CD4-positive, alpha-beta memory T cell (primary cell): ENCODE measurements at regions of chr17 and their contacts with region 1.

Region 1: DNA sequence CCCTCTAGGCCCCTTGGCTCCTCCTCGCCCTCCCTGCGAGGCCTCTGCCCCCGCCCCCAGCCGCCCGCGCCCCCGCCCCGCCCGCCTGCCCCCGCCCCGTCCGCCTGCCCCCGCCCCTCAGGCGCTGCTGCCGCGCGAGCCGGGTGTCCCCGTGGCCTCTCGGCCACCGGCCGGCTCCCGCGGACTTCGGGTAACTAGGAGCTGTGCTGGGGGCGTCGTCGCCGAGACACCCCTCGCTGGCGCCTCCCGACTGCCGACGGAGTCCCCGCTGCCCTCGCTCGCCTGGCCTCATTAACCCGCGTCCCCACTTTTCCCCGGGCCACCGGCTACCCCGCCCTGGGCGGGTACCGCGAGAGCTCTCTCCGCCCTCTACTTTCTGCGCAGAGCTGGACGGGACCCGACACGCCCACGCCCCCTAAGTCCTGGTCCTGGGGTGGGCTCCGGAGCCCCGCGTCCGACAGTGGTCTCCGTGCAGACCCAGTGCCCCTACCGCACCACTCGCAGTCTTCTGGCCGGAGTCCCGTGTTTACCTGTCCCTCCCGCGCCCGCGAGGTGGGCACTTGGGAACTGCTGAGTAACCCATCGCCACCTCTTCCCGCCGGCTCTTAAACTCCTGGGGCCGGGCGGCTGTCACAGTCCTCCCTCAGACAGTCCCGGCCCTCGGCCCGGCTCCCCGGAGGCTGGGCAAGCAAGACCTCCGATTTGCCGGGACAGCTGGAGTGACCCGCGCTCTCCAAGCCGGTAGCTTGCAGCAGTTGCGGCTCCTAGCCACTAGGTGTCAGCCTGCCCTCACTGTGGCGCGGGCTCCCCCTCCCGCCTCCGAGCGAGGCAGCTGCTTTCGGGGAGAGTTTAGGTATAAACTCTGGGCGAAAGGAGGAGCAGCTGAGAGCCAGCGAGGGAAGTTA is at the start of gene TLCD1:
- DNase-seq: peak; percentile 86 to 91 (median 88)
- H3K4me3 ChIP-seq: peak within 1 kb of the TSS; percentile 57 to 85
- H3K4me3 Mint-ChIP-seq: peak within 1 kb of the TSS; percentile 91 to 98 (median 96)
- H3K27ac ChIP-seq: peak within 1 kb of the TSS; percentile 98
- H3K27ac Mint-ChIP-seq: peak within 1 kb of the TSS; percentile 99 to 100 (median 100)
- H3K4me1 ChIP-seq: peaks cover 46% of the 10 kb centered on the region
- H3K4me1 Mint-ChIP-seq: peaks cover 36 to 70% (median 48%) of the 10 kb centered on the region in 4 donors
- H3K27me3 ChIP-seq: no peaks in the 10 kb centered on the region
- H3K27me3 Mint-ChIP-seq: no peaks in the 10 kb centered on the region
- total RNA-seq, gene TLCD1: 1.0 to 2.2 TPM

Region 2: GRCh38 chr17:28446728-28447395 is 279.6 kb before region 1 on chr17:
- CTCF ChIA-PET with region 1: no interaction called
- POLR2A ChIA-PET with region 1: no interaction called
- intact Hi-C with region 1: no loop called
- DNase-seq: no peak
- H3K4me3 ChIP-seq: no peak overlapping the region
- H3K4me3 Mint-ChIP-seq: no peak overlapping the region
- H3K27ac ChIP-seq: no peak overlapping the region
- H3K27ac Mint-ChIP-seq: no peak overlapping the region
- H3K4me1 ChIP-seq: no peaks in the 10 kb centered on the region
- H3K4me1 Mint-ChIP-seq: no peaks in the 10 kb centered on the region
- H3K27me3 ChIP-seq: no peaks in the 10 kb centered on the region
- H3K27me3 Mint-ChIP-seq: peaks cover 7 to 12% of the 10 kb centered on the region in 2 donors

Region 3: DNA sequence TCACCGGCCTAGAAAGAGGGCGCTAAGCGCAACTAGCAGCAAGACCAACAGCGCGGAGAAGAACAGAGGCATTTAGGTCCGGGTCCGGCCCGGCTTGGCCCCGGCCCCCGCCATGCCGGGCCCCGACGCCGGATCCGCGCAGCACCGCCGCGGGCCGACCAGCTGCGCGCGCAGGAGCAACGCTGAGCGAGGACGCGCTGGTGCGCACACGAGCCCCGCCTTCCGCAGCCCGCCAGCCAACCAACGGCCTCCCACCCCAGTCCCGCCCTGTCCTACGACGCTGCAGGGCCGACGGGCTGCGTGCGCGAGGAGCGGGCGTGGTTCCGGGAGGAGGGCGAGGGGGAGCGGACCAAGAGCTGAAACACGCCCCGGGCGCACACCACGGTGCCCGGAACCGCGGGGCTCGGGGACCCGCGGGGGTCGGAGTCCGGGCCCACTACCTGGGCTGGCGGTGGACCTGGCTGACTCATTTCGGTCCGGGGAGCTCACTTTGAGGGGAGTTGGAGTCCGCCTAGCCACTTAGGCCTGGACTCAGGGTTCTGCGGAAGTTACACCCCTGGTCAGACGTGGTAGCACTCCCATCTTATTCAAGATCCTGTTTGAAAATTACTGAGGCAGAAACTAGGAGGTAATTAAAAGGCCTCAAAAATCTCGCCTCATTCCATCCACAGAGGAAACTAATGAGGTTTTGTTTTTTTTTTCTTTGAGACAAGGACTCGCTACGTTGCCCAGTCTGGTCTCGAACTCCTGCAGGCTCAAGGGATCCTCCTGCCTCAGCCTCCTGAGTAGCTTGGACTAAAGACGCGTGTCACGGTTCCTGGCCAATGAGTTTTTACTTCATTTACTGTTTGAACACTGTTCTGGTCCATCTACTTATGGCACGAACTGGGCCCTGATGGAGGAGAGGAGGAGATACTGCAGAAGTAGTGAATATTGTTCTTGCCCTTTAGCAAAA is 81.2 kb before region 1 on chr17 and contains the start of gene BLTP2:
- CTCF ChIA-PET with region 1: interaction called, 19 read pairs
- POLR2A ChIA-PET with region 1: interaction called, 29 read pairs
- intact Hi-C with region 1: loop called (anchors 2 kb)
- DNase-seq: peak; percentile 93 to 95 (median 94)
- H3K4me3 ChIP-seq: peak within 1 kb of the TSS; percentile 45 to 98
- H3K4me3 Mint-ChIP-seq: peak within 1 kb of the TSS; percentile 86 to 96 (median 92)
- H3K27ac ChIP-seq: peak within 1 kb of the TSS; percentile 91
- H3K27ac Mint-ChIP-seq: peak within 1 kb of the TSS; percentile 93 to 99 (median 98)
- H3K4me1 ChIP-seq: peaks cover 47% of the 10 kb centered on the region
- H3K4me1 Mint-ChIP-seq: peaks cover 31 to 45% (median 37%) of the 10 kb centered on the region in 4 donors
- H3K27me3 ChIP-seq: no peaks in the 10 kb centered on the region
- H3K27me3 Mint-ChIP-seq: no peaks in the 10 kb centered on the region
- total RNA-seq, gene BLTP2: 132 to 149 TPM

Region 4: GRCh38 chr17:28750178-28751047 is 23.9 kb after region 1 on chr17:
- CTCF ChIA-PET with region 1: interaction called, 492 read pairs
- POLR2A ChIA-PET with region 1: interaction called, 528 read pairs
- intact Hi-C with region 1: loop called (anchors 1 kb)
- DNase-seq: peak; percentile 82 to 89 (median 85)
- H3K4me3 ChIP-seq: no peak overlapping the region
- H3K4me3 Mint-ChIP-seq: peak overlapping the region in 1 of 8 donors; percentile 49
- H3K27ac ChIP-seq: peak overlapping the region; percentile 10
- H3K27ac Mint-ChIP-seq: peak overlapping the region in 6 of 7 donors; percentile 17 to 85 (median 70)
- H3K4me1 ChIP-seq: peaks cover 13% of the 10 kb centered on the region
- H3K4me1 Mint-ChIP-seq: peaks cover 7 to 18% (median 11%) of the 10 kb centered on the region in 4 donors
- H3K27me3 ChIP-seq: no peaks in the 10 kb centered on the region
- H3K27me3 Mint-ChIP-seq: no peaks in the 10 kb centered on the region

Region 5: GRCh38 chr17:28788100-28788499 is 61.6 kb after region 1 on chr17:
- CTCF ChIA-PET with region 1: no interaction called
- POLR2A ChIA-PET with region 1: no interaction called
- intact Hi-C with region 1: no loop called
- DNase-seq: no peak
- H3K4me3 ChIP-seq: no peak overlapping the region
- H3K4me3 Mint-ChIP-seq: no peak overlapping the region
- H3K27ac ChIP-seq: no peak overlapping the region
- H3K27ac Mint-ChIP-seq: peak overlapping the region in 2 of 7 donors; percentile 17 to 57
- H3K4me1 ChIP-seq: peaks cover 3% of the 10 kb centered on the region
- H3K4me1 Mint-ChIP-seq: peaks cover 9 to 15% (median 11%) of the 10 kb centered on the region in 4 donors
- H3K27me3 ChIP-seq: no peaks in the 10 kb centered on the region
- H3K27me3 Mint-ChIP-seq: no peaks in the 10 kb centered on the region

Region 6: DNA sequence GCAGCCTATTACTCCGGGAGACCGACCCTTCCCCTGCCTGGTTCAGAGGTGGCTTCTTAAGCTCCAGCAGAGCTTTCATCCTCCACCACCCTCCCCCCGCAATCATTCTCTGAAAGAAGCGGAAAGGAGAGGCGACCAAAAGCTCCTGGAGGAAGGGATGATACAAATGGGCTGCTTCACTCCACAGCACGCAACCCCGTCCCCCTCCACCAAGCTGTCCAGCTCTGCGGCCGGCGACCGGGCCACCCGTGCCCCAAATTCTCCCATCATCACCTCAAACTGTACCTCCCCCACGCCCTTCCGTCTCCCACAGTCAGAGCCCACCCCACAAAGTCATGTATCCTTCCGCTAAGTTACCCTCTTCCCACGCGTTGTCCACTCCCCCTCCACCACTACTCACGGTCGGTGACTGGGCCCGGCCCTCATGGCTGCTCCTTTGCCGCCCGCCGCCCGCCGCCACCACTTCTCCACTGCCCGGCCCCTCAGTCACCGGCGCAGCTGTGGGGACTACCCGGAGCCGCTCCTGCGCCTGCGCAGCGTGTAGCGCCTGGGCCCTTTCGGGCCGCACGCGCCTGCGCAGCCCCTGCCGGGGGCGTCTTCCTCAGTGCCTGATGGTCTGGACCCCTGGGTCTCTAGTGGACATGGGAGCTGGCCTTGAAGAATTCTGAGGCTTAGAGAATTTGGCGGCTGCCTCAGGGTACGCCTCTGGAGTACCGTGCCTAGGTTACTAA is 116.0 kb after region 1 on chr17 and contains the start of gene FAM222B:
- CTCF ChIA-PET with region 1: interaction called, 13 read pairs
- POLR2A ChIA-PET with region 1: interaction called, 10 read pairs
- intact Hi-C with region 1: no loop called
- DNase-seq: peak; percentile 85 to 87 (median 87)
- H3K4me3 ChIP-seq: peak within 1 kb of the TSS; percentile 55 to 87
- H3K4me3 Mint-ChIP-seq: peak within 1 kb of the TSS; percentile 93 to 100 (median 98)
- H3K27ac ChIP-seq: peak within 1 kb of the TSS; percentile 84
- H3K27ac Mint-ChIP-seq: peak within 1 kb of the TSS; percentile 93 to 99 (median 98)
- H3K4me1 ChIP-seq: peaks cover 25% of the 10 kb centered on the region
- H3K4me1 Mint-ChIP-seq: peaks cover 15 to 26% (median 21%) of the 10 kb centered on the region in 4 donors
- H3K27me3 ChIP-seq: no peaks in the 10 kb centered on the region
- H3K27me3 Mint-ChIP-seq: no peaks in the 10 kb centered on the region
- total RNA-seq, gene FAM222B: 19.0 to 23.0 TPM

Region 7: DNA sequence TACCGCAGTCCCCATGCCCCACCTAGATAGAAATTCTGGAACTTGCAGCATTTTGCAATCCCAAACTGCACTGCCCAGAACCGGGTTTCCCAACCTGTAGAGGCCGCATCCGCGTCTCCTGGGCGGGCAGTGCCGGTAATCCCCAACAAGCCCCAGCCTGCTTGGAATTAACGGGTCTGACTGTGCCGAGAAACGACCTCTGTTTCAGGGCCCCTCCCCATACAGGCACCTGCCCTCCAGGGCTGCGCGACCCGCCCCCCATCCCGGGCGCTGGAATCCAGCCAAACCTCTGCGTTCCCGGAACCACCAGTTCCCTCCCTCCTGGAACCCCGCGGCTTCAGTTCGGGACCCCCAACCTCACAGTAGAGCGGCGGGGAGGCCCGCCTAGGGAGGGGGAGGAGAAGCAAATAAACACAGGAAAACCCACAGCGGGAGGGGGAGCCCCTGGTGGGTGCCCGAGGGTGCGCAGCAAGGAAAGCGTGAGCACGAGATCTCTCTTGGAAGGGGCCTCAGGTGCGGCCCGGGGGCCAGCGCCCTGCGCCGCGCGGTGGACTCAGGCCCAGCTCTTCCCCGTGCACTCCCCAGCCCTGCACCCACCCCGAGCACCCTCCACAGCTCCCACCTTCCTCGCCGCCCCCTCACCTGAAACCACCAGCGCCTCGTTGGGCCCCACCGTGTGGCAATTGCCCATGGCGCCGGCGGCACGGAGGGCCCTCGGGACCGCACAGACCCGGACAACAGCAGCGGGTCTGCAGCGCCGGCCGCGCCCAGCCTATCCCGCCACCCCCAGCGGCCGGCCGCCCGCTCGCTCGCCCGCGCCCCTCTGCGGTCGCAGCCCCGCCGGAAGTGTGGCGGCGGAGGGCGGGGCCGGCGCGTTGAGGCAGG is 170.6 kb after region 1 on chr17 and contains the start of gene FLOT2:
- CTCF ChIA-PET with region 1: interaction called, 25 read pairs
- POLR2A ChIA-PET with region 1: interaction called, 45 read pairs
- intact Hi-C with region 1: no loop called
- DNase-seq: peak; percentile 65 to 81 (median 74)
- H3K4me3 ChIP-seq: peak within 1 kb of the TSS; percentile 86 to 90
- H3K4me3 Mint-ChIP-seq: peak within 1 kb of the TSS; percentile 91 to 98 (median 96)
- H3K27ac ChIP-seq: peak within 1 kb of the TSS; percentile 88
- H3K27ac Mint-ChIP-seq: peak within 1 kb of the TSS; percentile 95 to 100 (median 96)
- H3K4me1 ChIP-seq: peaks cover 73% of the 10 kb centered on the region
- H3K4me1 Mint-ChIP-seq: peaks cover 47 to 83% (median 65%) of the 10 kb centered on the region in 4 donors
- H3K27me3 ChIP-seq: no peaks in the 10 kb centered on the region
- H3K27me3 Mint-ChIP-seq: no peaks in the 10 kb centered on the region
- total RNA-seq, gene FLOT2: 216 to 224 TPM

Region 8: GRCh38 chr17:28925912-28926365 is 199.5 kb after region 1 on chr17:
- CTCF ChIA-PET with region 1: interaction called, 5 read pairs
- POLR2A ChIA-PET with region 1: interaction called, 21 read pairs
- intact Hi-C with region 1: no loop called
- DNase-seq: peak; percentile 87 to 92 (median 89)
- H3K4me3 ChIP-seq: peak overlapping the region in 1 of 2 donors; percentile 15
- H3K4me3 Mint-ChIP-seq: peak overlapping the region; percentile 49 to 80 (median 60)
- H3K27ac ChIP-seq: peak overlapping the region; percentile 77
- H3K27ac Mint-ChIP-seq: peak overlapping the region; percentile 90 to 98 (median 96)
- H3K4me1 ChIP-seq: peaks cover 56% of the 10 kb centered on the region
- H3K4me1 Mint-ChIP-seq: peaks cover 49 to 79% (median 59%) of the 10 kb centered on the region in 4 donors
- H3K27me3 ChIP-seq: no peaks in the 10 kb centered on the region
- H3K27me3 Mint-ChIP-seq: no peaks in the 10 kb centered on the region

Region 9: DNA sequence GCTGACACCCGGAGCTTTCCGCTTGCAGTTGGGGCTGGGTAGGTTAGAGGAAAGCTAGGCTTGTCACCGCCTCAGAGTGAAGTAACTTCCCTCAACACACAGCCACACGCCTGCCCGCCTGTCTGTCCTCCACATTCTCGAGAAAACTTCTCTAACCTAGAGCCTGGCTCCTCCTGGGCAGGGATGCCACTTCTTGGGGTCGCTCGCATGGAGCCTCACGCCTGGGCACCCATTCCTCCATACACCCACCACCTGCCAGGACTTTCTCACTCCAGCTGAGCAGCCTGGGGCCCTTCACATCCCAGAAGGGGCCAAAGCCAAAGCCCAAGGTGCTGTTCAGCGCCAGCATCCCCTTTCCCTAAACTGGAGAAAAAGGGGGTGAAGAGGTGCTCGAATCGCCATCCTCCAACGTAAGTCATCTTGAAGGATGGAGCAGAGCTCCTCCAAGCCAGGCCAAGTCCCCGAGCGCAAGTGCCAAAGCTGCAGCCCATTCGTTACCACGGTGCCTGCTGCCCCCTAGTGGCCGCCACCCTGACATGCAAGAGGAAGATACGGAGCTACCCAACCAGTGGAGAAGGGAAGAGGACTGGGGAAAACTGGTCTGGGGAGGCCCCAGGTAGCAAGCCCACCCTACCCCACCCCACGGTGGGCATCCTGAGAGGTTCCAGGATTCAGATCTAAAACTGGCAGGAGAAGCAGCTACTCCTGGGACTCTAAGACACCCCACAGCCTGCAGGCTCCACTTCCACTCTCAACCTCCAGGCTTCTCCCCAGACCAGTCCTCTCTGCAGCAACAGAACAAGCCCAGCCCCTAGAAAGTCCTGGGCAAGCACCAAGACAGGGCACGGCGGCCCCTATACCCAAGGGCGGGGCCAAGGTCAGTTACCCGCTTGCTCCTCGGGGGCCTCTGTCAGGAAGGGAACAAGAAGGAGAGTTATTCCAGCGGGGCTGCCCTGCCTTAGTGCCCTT is 390.6 kb after region 1 on chr17:
- CTCF ChIA-PET with region 1: interaction called, 21 read pairs
- POLR2A ChIA-PET with region 1: interaction called, 8 read pairs
- intact Hi-C with region 1: loop called (anchors 2 kb)
- DNase-seq: peak; percentile 66 to 73 (median 71)
- H3K4me3 ChIP-seq: no peak overlapping the region
- H3K4me3 Mint-ChIP-seq: peak overlapping the region in 1 of 8 donors; percentile 15
- H3K27ac ChIP-seq: no peak overlapping the region
- H3K27ac Mint-ChIP-seq: peak overlapping the region in 4 of 7 donors; percentile 43 to 75 (median 60)
- H3K4me1 ChIP-seq: peaks cover 4% of the 10 kb centered on the region
- H3K4me1 Mint-ChIP-seq: peaks cover 4 to 9% (median 8%) of the 10 kb centered on the region in 4 donors
- H3K27me3 ChIP-seq: no peaks in the 10 kb centered on the region
- H3K27me3 Mint-ChIP-seq: no peaks in the 10 kb centered on the region